ENCODE measurements at regions of chr1 and their contacts with region 1.

Region 1: GRCh38 chr1:112298558-112298957 is 97.5 kb upstream of the CTTNBP2NL start:
- DNase-seq: peak; percentile 48
- ATAC-seq: peak; percentile 94
- H3K4me3 ChIP-seq: no peak overlapping the region
- H3K27ac ChIP-seq: no peak overlapping the region
- H3K4me1 ChIP-seq: no peaks in the 10 kb centered on the region
- H3K27me3 ChIP-seq: peaks cover 36% of the 10 kb centered on the region
- CTCF ChIP-seq: peak; percentile 70 to 89 (median 83)
- POLR2A ChIP-seq: no peak
- RAD21 ChIP-seq: peak; percentile 70

Region 2: GRCh38 chr1:111582644-111583618 is 715.6 kb before region 1 on chr1:
- CTCF ChIA-PET with region 1: no interaction called
- POLR2A ChIA-PET with region 1: no interaction called
- RAD21 ChIA-PET with region 1: no interaction called
- intact Hi-C with region 1: no loop called
- DNase-seq: no peak
- ATAC-seq: no peak
- H3K4me3 ChIP-seq: no peak overlapping the region
- H3K27ac ChIP-seq: no peak overlapping the region
- H3K4me1 ChIP-seq: no peaks in the 10 kb centered on the region
- H3K27me3 ChIP-seq: no peaks in the 10 kb centered on the region
- CTCF ChIP-seq: no peak
- POLR2A ChIP-seq: no peak
- RAD21 ChIP-seq: no peak

Region 3: GRCh38 chr1:112285746-112286145 is 12.8 kb before region 1 on chr1:
- CTCF ChIA-PET with region 1: interaction called, 21 read pairs
- POLR2A ChIA-PET with region 1: no interaction called
- RAD21 ChIA-PET with region 1: no interaction called
- intact Hi-C with region 1: no loop called
- DNase-seq: no peak
- ATAC-seq: no peak
- H3K4me3 ChIP-seq: no peak overlapping the region
- H3K27ac ChIP-seq: no peak overlapping the region
- H3K4me1 ChIP-seq: no peaks in the 10 kb centered on the region
- H3K27me3 ChIP-seq: peaks cover 30% of the 10 kb centered on the region
- CTCF ChIP-seq: no peak
- POLR2A ChIP-seq: no peak
- RAD21 ChIP-seq: no peak

Region 4: DNA sequence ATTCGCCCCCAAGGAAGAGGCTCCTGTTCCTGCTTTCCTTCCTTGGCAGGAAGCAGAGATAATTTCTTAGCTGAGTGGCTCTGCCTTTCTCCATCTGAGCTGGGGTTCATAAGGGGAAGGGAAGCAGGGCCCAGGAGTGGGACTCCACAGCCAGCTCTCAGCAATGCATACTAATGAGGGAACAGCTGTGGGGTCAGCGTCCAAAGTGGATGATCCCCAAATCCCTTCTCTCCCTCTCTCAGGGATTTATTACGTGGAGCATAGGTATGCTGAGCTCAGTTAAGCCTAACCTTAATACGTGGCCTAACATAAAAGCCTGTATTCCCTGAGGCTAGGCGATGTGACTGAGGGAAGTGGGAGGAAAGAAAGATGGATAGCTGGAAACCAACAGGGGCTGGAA is 10.2 kb after region 1 on chr1:
- CTCF ChIA-PET with region 1: interaction called, 14 read pairs
- POLR2A ChIA-PET with region 1: no interaction called
- RAD21 ChIA-PET with region 1: no interaction called
- intact Hi-C with region 1: no loop called
- DNase-seq: no peak
- ATAC-seq: no peak
- H3K4me3 ChIP-seq: no peak overlapping the region
- H3K27ac ChIP-seq: no peak overlapping the region
- H3K4me1 ChIP-seq: no peaks in the 10 kb centered on the region
- H3K27me3 ChIP-seq: peaks cover 97% of the 10 kb centered on the region
- CTCF ChIP-seq: no peak
- POLR2A ChIP-seq: no peak
- RAD21 ChIP-seq: no peak

Region 5: GRCh38 chr1:112369392-112370285 is 71.1 kb after region 1 on chr1:
- CTCF ChIA-PET with region 1: interaction called, 11 read pairs
- POLR2A ChIA-PET with region 1: no interaction called
- RAD21 ChIA-PET with region 1: interaction called in 1 of 2 experiments, 3 read pairs
- intact Hi-C with region 1: loop called (anchors 2 kb)
- DNase-seq: peak; percentile 76
- ATAC-seq: peak; percentile 100
- H3K4me3 ChIP-seq: peak overlapping the region in 1 of 2 experiments; percentile 21; a peak in 1 of 4 replicates
- H3K27ac ChIP-seq: no peak overlapping the region
- H3K4me1 ChIP-seq: peaks cover 0 to 4% of the 10 kb centered on the region in 2 experiments; a peak in 1 of 4 replicates
- H3K27me3 ChIP-seq: no peaks in the 10 kb centered on the region
- CTCF ChIP-seq: peak; percentile 97 to 99 (median 98)
- POLR2A ChIP-seq: no peak
- RAD21 ChIP-seq: peak; percentile 95

Measured in HCT116 (cell line).